Transverse colon (tissue), 4 donors: ENCODE measurements at regions of chr6 and their contacts with region 1.

Region 1: GRCh38 chr6:75504465-75505228 is 11.0 kb upstream of the FILIP1 start:
- DNase-seq: no peak
- H3K4me3 ChIP-seq: no peak overlapping the region
- H3K27ac ChIP-seq: no peak overlapping the region
- H3K4me1 ChIP-seq: no peaks in the 10 kb centered on the region
- H3K27me3 ChIP-seq: no peaks in the 10 kb centered on the region
- CTCF ChIP-seq: peak in 1 of 5 experiments; percentile 20
- EP300 ChIP-seq: no peak
- POLR2A ChIP-seq: no peak

Region 2: DNA sequence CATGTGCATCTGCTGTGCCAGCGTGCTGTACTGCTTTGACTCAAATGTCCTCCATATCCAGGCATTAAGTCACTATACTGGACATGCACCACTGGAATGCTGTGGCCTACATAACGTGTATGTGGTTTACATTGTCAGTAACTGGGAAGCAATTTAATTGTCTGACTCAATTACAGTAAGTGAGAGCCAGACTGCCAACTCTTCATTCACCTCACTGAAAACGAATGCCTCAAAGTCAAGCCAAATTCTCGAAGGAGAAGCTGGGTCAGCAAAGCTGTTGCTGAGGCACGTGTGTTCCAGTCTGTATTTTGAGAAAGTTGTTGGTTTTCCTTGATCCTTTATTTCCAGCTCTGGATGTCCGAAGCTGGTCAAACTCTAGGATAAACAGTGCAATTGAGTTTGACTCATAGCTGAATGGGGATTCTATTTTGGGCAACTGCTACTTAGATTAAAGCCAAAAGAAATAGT is 833.1 kb before region 1 on chr6:
- in situ Hi-C with region 1: no loop called
- intact Hi-C with region 1: no loop called
- DNase-seq: no peak
- H3K4me3 ChIP-seq: no peak overlapping the region
- H3K27ac ChIP-seq: no peak overlapping the region
- H3K4me1 ChIP-seq: no peaks in the 10 kb centered on the region
- H3K27me3 ChIP-seq: no peaks in the 10 kb centered on the region
- CTCF ChIP-seq: no peak
- EP300 ChIP-seq: no peak
- POLR2A ChIP-seq: no peak

Region 3: DNA sequence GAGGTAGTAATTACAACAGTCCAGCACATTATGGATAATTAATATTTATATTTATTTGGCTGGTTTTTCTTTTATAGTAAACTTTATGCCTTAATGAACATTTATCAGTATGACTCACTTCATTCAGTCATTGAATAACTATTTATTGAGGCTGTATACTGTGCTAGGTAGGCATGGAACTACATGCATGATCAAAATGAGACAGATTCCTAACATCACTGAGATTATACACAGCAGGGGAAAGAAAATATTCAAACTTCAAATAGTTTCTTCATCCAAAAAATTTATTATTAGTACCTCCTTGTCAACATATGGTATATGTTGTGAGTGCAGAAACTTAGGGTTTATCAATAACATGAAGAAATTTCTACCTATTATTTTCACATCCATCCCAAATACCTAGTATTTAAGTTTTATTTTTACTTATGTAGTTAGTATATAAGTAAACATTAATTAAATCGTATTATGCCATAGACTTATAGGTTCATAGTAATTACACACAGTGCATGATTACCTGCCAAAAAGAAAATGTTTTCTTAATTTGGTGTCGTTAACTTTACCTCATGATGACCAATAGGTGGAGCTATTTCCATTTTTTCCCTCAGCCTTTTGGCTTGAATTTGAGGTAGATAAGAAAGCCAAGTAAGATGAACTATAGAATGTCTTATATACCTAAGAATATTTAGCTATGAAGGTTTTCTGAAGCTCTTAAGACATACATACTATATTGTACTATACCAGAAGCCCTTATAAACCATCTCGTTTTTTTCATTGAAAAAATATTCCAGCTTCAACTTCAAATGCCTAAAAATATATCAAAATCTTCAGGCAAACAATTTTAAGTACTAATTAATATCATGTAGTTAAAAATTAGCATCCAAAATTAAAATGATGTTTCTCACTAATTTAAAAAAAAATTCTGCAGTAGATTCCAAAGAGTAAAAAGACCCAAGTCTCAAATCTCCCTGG is 207.6 kb before region 1 on chr6:
- in situ Hi-C with region 1: loop called in 1 of 4 experiments (anchors 25 kb)
- intact Hi-C with region 1: loop called (anchors 5 kb)
- DNase-seq: no peak
- H3K4me3 ChIP-seq: no peak overlapping the region
- H3K27ac ChIP-seq: no peak overlapping the region
- H3K4me1 ChIP-seq: peaks cover 0 to 28% (median 12%) of the 10 kb centered on the region in 4 donors
- H3K27me3 ChIP-seq: no peaks in the 10 kb centered on the region
- CTCF ChIP-seq: peak; percentile 64 to 79 (median 72)
- EP300 ChIP-seq: no peak
- POLR2A ChIP-seq: no peak